H1 (cell line): ENCODE measurements at regions of chr15 and their contacts with region 1.

Region 1: DNA sequence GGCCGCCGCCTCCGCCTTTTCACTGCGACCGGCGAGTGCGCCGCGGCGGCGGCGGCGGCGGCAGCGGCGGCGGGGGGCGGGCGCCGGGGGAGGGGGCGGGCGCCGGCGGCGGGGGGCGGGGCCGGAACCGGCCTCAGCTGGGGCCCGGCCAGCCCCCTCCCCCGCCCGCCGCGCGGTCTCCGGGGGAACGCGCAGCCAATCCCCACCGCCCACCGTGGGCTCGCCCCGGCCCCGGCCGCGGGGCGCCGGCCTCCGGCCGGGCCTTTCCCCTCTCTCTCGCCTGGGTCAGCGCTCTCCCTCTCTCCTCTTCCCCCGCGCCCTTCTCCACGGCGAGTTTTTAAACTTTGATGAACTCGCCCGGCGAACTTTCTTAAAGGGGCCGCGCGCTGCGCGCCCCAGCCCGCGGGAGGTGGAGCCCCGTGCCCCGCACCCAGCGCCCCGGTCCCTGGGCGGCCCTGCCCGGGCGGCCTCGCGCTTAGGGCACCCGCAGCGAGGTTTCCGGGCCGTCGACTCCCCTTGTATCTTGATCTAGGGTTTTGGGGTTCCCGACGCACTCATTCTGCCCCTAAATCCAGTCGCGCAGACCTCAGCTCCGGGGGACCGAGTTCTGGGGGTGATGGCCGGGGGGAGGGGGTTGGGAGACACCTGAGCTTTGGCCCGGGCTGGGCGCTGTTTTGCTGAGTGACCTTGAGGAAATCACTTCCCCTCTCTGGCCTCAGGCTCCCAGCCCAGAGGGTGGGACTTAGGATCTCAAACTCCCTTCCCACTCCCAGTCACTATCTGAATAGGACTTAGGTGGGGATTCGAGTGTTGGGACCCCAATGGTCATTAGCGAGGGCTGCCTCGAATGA is at the start of gene RBPMS2:
- DNase-seq: peak in 1 of 2 experiments; percentile 62
- H3K4me3 ChIP-seq: peak within 1 kb of the TSS; percentile 74 to 95 (median 88)
- H3K27ac ChIP-seq: peak within 1 kb of the TSS; percentile 81; the same call in 1 of the 2 replicates
- H3K4me1 ChIP-seq: peaks cover 23 to 34% (median 30%) of the 10 kb centered on the region in 4 experiments
- H3K27me3 ChIP-seq: no peaks in the 10 kb centered on the region
- CTCF ChIP-seq: no peak
- EP300 ChIP-seq: no peak
- POLR2A ChIP-seq: no peak; a peak in 1 of 3 replicates
- RAD21 ChIP-seq: no peak
- total RNA-seq, gene RBPMS2: 238 and 243 TPM in 2 replicates

Region 2: DNA sequence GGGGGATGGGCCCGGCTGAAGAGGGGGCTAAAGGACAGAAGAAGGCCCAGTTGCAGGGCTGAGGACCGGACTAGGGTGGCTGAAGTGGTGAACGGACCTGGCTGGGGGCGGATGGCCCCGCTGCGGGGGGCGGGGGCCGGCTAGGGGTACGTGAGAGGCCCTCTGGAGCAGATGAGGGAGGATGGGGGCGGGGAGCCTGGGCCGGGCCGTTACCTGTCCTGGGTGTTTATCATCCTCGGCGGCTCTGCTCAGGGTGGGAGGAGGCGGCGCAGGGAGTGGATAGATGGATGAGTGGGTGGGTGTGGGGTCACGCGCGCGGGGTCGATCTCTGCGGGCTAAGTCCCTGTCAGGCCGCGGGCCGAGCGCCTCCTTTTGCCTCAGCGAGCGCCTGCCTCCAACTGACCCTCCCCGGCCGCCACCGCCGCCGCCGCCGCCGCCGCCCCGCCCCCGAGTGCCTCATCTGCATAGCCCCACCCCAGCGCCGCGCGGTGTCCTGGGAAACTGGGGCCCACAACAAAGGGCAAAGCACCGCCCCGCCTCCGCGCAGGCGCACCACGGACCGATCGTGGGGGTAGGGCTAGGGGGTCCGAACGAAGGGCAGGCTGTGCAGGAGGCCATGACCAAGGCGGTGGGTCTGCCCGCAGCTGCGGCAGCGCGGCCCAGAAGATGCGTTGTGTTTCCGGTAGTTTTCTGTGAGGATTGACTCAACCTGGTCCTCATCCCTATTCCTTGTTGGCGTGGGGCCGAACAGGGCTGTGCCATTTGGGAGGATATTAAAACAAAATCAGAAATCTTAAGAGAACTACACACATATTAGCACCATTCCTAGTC is 72.7 kb before region 1 on chr15:
- CTCF ChIA-PET with region 1: interaction called, 3 read pairs
- POLR2A ChIA-PET with region 1: interaction called, 11 read pairs
- DNase-seq: peak; percentile 86 to 100
- H3K4me3 ChIP-seq: peak overlapping the region; percentile 70 to 88 (median 85)
- H3K27ac ChIP-seq: peak overlapping the region; percentile 82
- H3K4me1 ChIP-seq: peaks cover 12 to 23% (median 17%) of the 10 kb centered on the region in 4 experiments
- H3K27me3 ChIP-seq: no peaks in the 10 kb centered on the region
- CTCF ChIP-seq: no peak
- EP300 ChIP-seq: peak in 1 of 2 experiments; percentile 51; a peak in 1 of 3 replicates
- POLR2A ChIP-seq: peak; percentile 69 to 90
- RAD21 ChIP-seq: no peak; a peak in 1 of 4 replicates

Region 3: GRCh38 chr15:64761156-64761555 is 14.6 kb before region 1 on chr15:
- CTCF ChIA-PET with region 1: interaction called, 7 read pairs
- POLR2A ChIA-PET with region 1: interaction called, 22 read pairs
- DNase-seq: no peak
- H3K4me3 ChIP-seq: no peak overlapping the region
- H3K27ac ChIP-seq: no peak overlapping the region
- H3K4me1 ChIP-seq: peaks cover 0 to 29% (median 14%) of the 10 kb centered on the region in 4 experiments; a peak in 5 of 7 replicates
- H3K27me3 ChIP-seq: no peaks in the 10 kb centered on the region
- CTCF ChIP-seq: no peak
- EP300 ChIP-seq: no peak
- POLR2A ChIP-seq: no peak
- RAD21 ChIP-seq: no peak

Region 4: DNA sequence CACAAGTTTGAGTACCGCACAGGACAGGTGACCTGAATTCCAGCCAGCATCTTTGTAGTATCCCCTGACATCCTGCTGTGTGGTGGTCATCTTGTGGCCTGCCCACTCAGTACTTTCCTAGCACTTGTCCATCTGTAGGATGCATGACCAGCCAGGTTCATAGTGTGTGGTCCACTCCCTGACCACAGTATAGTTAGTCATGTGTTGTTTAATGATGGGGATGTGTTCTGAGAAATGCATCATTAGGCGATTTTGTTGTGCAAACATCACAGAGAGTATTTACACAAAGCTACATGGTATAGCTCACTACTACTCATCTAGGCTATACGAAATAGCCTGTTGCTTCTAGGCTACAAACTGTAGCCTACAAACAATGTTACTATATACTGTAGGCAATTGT is 16.5 kb after region 1 on chr15:
- CTCF ChIA-PET with region 1: interaction called, 4 read pairs
- POLR2A ChIA-PET with region 1: interaction called, 74 read pairs
- DNase-seq: no peak
- H3K4me3 ChIP-seq: no peak overlapping the region
- H3K27ac ChIP-seq: no peak overlapping the region
- H3K4me1 ChIP-seq: no peaks in the 10 kb centered on the region
- H3K27me3 ChIP-seq: no peaks in the 10 kb centered on the region
- CTCF ChIP-seq: no peak
- EP300 ChIP-seq: no peak
- POLR2A ChIP-seq: no peak
- RAD21 ChIP-seq: no peak